ENCODE measurements at regions of chr7 and their contacts with region 1.

Region 1: DNA sequence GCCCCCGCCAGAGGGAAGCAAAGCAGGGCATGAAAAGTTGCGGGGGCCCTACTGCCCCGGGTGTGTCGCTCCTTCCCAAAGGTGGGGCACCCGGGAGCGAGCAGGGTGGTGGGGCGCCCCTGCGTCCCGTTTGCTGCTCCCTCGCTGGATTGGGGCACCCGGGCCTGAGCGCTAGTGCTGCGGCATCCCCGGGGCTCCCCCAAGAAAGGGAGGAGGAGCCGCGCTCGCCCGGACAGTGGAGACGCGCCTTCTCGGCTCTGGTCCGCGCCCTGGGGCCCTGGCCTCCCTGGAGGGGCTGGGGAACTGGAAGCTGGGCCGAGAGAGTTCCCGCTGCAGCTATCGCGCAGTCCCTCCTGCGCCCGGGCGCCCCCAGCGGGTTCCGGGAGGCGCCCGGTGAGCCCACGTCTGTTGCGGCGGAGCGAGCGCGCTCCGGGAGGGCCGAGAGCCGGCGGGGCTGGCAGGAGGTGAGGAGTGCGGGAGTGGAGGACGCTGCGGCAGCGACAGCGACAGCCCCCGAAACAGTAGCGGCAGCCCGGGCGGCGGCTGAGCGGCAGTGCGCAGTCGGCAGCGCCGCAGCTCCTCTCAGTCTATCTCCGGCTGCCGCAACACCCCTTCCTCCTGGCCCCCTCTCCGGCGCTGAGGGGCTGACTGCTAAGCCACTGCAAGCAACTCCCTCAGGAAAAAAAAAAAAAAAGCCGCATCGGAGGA is 504 bp upstream of the BMPER start:
- DNase-seq: no peak
- H3K4me3 ChIP-seq: peak overlapping the region; percentile 67
- H3K27ac ChIP-seq: no peak overlapping the region
- H3K27me3 ChIP-seq: no peaks in the 10 kb centered on the region
- CTCF ChIP-seq: peak; percentile 37

Region 2: GRCh38 chr7:33423646-33424020 is 481.2 kb before region 1 on chr7:
- CTCF ChIA-PET with region 1: interaction called, 10 read pairs
- POLR2A ChIA-PET with region 1: no interaction called
- DNase-seq: no peak
- H3K4me3 ChIP-seq: no peak overlapping the region
- H3K27ac ChIP-seq: no peak overlapping the region
- H3K27me3 ChIP-seq: no peaks in the 10 kb centered on the region
- CTCF ChIP-seq: peak; percentile 27

Region 3: DNA sequence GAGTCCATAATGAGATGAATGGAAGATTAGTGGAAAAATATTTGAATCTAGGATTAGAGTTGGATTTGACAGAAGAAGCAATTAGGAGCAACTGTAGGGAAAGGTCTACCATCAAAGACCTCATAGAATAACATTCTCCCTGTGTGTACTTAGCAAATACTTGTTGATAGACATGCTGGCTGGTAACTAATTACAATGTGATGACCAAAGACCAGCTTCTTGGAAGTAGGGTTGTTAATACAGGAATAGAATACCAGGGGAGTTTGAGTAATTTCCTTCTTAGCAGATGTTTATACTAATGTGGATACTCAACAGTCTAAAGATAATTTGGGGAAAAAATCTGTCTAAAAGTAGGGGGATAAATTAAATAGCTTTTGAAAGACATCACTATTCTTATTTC is 357.0 kb before region 1 on chr7:
- CTCF ChIA-PET with region 1: no interaction called
- POLR2A ChIA-PET with region 1: no interaction called
- DNase-seq: no peak
- H3K4me3 ChIP-seq: no peak overlapping the region
- H3K27ac ChIP-seq: no peak overlapping the region
- H3K27me3 ChIP-seq: no peaks in the 10 kb centered on the region
- CTCF ChIP-seq: no peak

Measured in AG04450 (cell line).